ENCODE measurements at regions of chr1 and their contacts with region 1.

Region 1: DNA sequence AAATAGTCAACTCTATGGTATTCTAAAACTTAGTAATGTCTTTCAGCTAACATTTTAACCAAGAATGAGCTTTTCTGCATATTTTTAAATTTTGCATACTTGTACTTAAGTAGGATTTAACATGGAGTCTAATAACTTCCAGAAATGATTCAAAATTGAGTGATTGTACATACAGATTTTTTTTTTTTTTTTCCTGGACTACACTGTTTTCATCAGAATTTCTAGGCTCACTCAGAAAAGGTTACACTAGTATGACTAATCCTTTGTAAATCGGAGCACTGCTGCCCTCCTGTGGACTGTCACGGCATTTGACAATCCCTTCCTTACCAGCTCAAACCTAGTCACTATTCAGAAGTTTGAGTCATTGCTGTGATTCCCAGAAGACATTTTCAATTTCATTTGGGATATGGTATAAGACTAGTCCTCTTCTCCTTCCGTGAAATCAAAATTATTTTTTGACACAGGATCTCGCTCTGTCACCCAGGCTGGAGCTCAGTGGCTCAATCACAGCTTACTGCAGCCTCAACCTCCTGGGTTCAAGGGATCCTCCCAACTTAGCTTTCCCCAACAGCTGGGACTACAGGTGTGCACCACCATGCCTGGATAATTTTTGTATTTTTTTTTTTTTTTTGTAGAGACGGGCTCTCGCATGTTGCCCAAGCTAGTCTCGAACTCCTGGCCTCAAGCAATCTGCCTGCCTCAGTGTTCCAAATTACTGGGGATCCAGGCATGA is 45.5 kb downstream of the CD46 start:
- DNase-seq: peak; percentile 68
- H3K4me3 ChIP-seq: no peak overlapping the region
- H3K27ac ChIP-seq: no peak overlapping the region
- H3K27me3 ChIP-seq: no peaks in the 10 kb centered on the region
- CTCF ChIP-seq: peak; percentile 81

Region 2: GRCh38 chr1:206479183-206480125 is 1317.9 kb before region 1 on chr1:
- CTCF ChIA-PET with region 1: no interaction called
- POLR2A ChIA-PET with region 1: no interaction called
- DNase-seq: peak; percentile 59
- H3K4me3 ChIP-seq: no peak overlapping the region
- H3K27ac ChIP-seq: no peak overlapping the region
- H3K27me3 ChIP-seq: no peaks in the 10 kb centered on the region
- CTCF ChIP-seq: peak; percentile 83

Region 3: DNA sequence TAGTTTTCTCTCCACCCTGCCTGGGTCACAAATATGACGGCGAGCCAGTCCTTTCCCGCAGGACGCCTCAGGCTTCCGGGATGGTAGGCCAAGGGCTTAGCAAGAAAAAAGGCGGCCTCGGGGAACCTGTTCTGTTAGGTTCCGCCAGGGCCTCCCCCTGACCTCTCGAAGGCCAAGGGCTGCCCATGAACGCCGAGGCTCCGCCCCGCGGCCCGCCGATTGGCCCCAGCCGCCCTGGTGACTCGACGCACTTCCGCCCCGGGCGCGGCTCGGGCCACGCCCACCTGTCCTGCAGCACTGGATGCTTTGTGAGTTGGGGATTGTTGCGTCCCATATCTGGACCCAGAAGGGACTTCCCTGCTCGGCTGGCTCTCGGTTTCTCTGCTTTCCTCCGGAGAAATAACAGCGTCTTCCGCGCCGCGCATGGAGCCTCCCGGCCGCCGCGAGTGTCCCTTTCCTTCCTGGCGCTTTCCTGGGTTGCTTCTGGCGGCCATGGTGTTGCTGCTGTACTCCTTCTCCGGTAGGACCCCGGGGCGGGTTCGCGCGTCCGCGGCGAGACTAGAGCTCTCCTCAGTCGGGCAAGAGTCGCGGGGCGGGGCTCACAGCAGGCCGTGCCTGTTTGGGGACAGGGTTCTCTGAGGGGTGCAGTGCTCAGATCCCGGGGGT is 45.5 kb before region 1 on chr1 and contains the start of gene CD46:
- CTCF ChIA-PET with region 1: interaction called, 14 read pairs
- POLR2A ChIA-PET with region 1: interaction called, 6 read pairs
- DNase-seq: peak; percentile 61
- H3K4me3 ChIP-seq: peak within 1 kb of the TSS; percentile 96
- H3K27ac ChIP-seq: peak within 1 kb of the TSS; percentile 61
- H3K27me3 ChIP-seq: no peaks in the 10 kb centered on the region
- CTCF ChIP-seq: no peak
- polyA plus RNA-seq, gene CD46: 112 and 148 TPM in 2 replicates

Region 4: DNA sequence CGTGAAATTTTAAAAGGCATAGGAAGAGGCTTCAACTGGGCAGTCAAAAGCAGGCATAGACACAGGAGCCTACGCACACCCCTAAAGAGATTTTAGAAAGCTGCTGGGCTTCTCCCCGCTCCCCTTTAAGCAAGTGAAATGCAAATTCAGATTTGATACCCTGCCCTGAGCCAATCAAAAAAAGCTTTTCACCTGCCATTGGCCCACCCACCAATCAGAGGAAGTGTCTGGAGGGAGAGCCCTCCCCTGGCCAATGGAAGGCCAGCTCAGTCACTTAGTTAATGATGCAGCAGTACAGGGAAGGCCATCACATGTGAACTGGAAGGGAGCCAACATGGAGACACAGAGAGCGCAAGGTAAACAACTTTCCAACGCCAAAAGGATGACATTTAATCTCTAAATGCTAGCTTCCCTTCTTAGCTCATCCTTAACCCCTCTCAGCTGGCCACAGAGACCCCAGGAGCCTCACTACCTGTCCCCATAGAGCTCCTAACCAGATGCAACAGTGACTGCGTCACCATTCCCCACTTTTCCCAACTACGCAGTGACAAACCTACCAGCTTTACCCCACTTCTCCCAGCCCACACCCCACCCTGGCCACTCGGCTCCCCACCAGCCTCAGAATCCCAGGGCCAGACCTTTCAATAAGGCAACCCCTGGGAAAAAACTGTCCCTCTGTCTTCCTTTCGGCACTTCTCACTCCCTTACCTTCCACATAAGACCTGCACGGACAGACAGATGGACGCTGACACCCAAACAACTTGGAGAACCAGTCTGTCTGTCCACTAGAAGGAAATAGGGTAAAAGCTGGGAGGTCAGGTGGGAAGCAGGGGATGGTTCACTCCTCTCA is 25.4 kb after region 1 on chr1:
- CTCF ChIA-PET with region 1: interaction called, 38 read pairs
- POLR2A ChIA-PET with region 1: interaction called, 5 read pairs
- DNase-seq: no peak
- H3K4me3 ChIP-seq: no peak overlapping the region
- H3K27ac ChIP-seq: peak overlapping the region; percentile 21
- H3K27me3 ChIP-seq: no peaks in the 10 kb centered on the region
- CTCF ChIP-seq: no peak

Region 5: DNA sequence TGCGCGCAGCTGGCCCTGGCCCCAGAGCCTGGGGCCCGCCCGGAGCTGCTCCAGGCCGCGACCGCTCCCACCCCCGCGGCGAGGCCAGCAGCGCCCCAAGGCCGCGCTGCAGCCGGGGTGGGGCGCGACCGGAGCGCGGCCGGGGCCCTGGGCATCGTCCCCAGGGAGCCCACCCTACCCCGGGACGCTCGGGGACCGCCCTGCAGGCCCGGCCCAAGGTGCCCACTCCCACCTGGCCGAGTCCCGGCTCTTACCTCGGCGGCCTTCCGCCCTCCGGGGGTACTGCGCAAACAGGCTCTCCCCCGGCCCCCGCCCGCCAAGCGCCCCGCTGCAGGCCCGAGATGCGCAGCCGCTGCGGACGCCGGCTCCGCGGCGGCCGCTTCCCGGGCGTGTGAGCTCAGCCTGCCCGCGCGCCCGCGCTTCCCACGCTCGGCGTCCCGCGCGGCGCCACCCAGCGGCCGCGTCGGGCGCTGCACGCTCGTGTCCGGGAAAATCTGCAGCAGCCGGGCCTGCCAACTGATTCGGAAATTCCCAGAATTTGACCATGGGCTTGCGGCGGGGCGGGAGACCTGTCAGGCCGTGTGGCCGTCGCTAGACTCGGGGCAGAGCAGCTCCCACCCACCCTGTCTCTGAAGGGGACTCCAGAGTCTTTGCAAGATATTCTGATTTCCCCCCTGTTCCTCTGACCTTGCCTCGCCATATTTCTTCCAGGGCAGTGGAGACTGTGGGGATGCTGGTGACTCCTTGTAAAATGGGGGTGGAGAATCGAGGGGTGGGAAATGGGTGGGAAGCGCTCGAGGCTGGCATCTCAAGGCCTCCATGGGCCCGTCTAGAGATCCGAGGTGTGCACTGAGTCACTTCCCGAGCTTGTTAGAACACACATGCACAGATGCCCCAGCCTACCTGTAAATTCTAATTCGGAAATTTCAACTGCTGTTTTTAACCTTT is 71.7 kb after region 1 on chr1:
- CTCF ChIA-PET with region 1: interaction called, 25 read pairs
- POLR2A ChIA-PET with region 1: no interaction called
- DNase-seq: no peak
- H3K4me3 ChIP-seq: peak overlapping the region; percentile 71
- H3K27ac ChIP-seq: no peak overlapping the region
- H3K27me3 ChIP-seq: no peaks in the 10 kb centered on the region
- CTCF ChIP-seq: peak; percentile 65